Dendritic cell treated with granulocyte-macrophage colony-stimulating factor and Interleukin-4, amounts not matched to agents 40 ng/mL and 50 ng/mL, for 4 days (primary cell): ENCODE measurements at regions of chr12 and their contacts with region 1.

Region 1: GRCh38 chr12:98490501-98491453 is 24.6 kb upstream of the TMPO start:
- H3K4me3 Mint-ChIP-seq: peak overlapping the region; percentile 23
- H3K27ac Mint-ChIP-seq: peak overlapping the region; percentile 83
- H3K4me1 Mint-ChIP-seq: peaks cover 5% of the 10 kb centered on the region
- H3K27me3 Mint-ChIP-seq: no peaks in the 10 kb centered on the region

Region 2: DNA sequence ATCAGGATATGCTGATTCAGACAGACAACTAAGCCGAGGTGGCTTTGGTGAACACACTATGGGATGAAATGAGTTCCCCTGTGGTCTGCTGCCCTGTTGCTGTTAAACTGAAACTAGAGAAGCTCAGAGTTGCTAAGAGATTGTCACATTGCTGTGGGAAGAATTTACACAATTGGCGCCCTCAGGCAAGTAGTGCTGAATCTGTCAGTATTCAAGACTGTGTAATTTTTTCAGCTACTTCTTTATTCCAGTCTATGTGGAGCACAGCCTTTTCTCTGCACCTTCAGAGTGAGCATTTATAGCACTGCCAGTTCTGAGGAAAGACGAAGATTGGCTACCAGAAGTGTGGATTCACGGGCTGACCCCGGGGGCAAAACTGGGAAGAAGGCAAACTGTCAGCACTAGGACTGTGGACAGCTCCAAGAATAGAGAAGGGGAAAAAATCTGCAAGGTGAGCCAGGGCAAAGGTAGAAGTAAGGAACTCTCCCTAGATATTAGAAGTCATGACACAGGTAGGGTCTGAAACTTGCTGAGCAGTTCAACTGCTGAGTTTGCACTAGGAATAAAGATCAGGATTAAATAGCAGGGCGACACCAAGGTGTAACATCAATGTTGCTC is 194.2 kb before region 1 on chr12:
- intact Hi-C with region 1: no loop called
- H3K4me3 Mint-ChIP-seq: no peak overlapping the region
- H3K27ac Mint-ChIP-seq: no peak overlapping the region
- H3K4me1 Mint-ChIP-seq: no peaks in the 10 kb centered on the region
- H3K27me3 Mint-ChIP-seq: peaks cover 3% of the 10 kb centered on the region

Region 3: DNA sequence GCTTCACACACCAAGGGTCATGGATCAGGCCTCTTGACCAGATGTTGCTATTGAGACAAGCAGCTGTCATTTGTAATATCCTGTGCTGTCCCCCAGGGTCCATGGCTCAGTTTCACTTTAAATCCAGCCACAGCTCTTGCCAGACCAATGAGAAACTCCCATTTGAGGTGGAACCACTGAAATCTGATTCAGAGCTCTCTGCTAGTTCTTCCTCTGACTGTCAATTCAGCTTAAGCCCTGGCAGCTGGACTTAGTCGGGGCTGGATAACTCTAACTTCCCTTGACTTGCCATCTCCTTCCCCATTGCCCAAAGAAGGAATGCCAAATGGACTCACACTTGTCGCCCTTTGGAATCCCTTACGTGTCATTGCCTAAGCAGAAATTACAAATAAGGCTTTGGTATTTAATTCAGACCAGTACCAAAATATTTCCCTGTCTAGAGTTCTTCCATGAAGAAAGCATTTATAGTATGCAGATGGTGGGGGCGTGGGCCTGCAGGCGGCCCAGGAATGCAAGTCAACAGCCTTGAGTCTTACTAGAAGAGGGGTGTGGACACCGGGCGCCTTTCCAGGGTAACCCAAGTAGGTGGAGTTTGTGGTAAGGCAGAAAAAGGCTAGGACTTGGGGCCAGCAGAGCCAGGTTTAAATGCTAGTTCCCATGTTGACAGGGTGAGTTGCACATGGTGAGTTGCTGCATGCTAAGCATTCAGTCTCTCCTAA is 72.3 kb before region 1 on chr12:
- intact Hi-C with region 1: no loop called
- H3K4me3 Mint-ChIP-seq: no peak overlapping the region
- H3K27ac Mint-ChIP-seq: peak overlapping the region; percentile 23
- H3K4me1 Mint-ChIP-seq: peaks cover 34% of the 10 kb centered on the region
- H3K27me3 Mint-ChIP-seq: no peaks in the 10 kb centered on the region

Region 4: DNA sequence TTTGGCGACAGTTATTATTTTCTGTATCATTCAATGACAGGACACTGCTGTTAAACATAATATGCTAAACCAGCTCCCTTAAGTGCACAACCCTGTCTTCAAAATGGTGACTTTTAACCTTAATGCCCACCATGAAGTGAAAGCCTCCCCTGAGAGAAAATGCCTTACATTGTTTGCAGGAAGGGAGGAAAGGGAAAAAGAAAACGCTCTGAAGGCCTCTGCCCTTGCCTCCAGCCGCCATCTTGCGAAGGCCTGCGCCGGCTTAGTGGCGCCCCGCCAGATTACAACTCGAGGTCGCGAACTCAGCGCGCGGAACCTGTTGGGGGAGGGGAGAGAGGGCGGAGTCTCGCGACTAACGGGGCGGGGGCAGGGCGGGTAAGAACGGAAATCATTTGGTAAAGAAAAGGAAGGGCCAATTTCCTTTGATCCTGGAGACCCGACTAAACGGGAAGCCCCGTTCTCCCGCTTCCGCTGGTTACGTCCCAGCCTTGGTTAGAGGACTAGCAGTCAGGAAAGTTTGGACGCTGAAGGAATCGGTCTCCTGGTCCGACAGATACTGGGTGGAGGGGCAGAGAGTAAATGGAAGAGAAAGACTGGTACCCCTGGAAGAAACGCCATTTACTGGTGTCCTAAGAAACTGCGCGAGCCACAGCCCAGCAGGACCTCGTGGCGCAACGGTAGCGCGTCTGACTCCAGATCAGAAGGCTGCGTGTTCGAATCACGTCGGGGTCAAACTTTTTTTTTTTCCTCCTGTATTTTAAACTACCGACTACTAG is 13.0 kb after region 1 on chr12:
- intact Hi-C with region 1: loop called (anchors 1 kb)
- H3K4me3 Mint-ChIP-seq: peak overlapping the region; percentile 89
- H3K27ac Mint-ChIP-seq: peak overlapping the region; percentile 94
- H3K4me1 Mint-ChIP-seq: peaks cover 12% of the 10 kb centered on the region
- H3K27me3 Mint-ChIP-seq: no peaks in the 10 kb centered on the region

Region 5: GRCh38 chr12:98532681-98533304 is 42.0 kb after region 1 on chr12:
- intact Hi-C with region 1: loop called (anchors 5 kb)
- H3K4me3 Mint-ChIP-seq: no peak overlapping the region
- H3K27ac Mint-ChIP-seq: no peak overlapping the region
- H3K4me1 Mint-ChIP-seq: no peaks in the 10 kb centered on the region
- H3K27me3 Mint-ChIP-seq: no peaks in the 10 kb centered on the region

Region 6: GRCh38 chr12:98743347-98743953 is 252.7 kb after region 1 on chr12:
- intact Hi-C with region 1: no loop called
- H3K4me3 Mint-ChIP-seq: no peak overlapping the region
- H3K27ac Mint-ChIP-seq: no peak overlapping the region
- H3K4me1 Mint-ChIP-seq: peaks cover 8% of the 10 kb centered on the region
- H3K27me3 Mint-ChIP-seq: peaks cover 51% of the 10 kb centered on the region